Left lung (tissue), 14 donors: ENCODE measurements at regions of chr5 and their contacts with region 1.

Region 1: DNA sequence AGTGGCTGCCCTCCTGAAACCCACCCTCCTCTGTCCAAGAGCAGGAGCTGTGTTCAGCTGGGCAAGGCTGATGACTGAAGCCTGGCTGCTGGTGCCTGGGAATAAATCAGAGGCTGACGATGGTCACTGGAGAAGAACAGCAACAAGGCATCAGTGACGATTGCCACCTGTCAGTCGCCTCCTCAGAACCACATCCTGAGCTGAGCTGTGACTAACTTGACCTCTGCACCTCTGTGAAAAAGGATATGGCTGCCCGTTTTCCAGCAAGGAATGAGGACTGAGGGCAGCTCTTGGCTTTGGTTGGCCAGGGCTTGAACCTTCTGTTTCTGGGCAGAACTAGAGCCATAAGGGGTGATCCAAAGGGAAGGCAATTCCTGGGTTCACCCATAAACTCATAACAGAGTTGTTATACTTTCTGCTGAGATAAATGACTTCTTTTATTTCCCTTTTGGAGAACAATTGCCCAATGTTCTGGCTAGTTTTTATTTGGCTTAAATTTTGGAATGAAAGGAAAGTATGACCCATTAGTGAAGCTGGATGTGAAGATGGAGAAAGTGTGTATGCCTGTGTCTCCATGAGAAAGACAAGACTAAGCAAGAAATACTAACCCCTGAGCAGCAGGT is 40.1 kb downstream of the TRIP13 start:
- DNase-seq: no peak
- ATAC-seq: peak; percentile 47
- H3K4me3 ChIP-seq: no peak overlapping the region
- H3K27ac ChIP-seq: peak overlapping the region in 1 of 2 donors; percentile 44
- H3K4me1 ChIP-seq: no peaks in the 10 kb centered on the region
- H3K27me3 ChIP-seq: peaks cover 0 to 4% of the 10 kb centered on the region in 2 donors
- CTCF ChIP-seq: no peak

Region 2: DNA sequence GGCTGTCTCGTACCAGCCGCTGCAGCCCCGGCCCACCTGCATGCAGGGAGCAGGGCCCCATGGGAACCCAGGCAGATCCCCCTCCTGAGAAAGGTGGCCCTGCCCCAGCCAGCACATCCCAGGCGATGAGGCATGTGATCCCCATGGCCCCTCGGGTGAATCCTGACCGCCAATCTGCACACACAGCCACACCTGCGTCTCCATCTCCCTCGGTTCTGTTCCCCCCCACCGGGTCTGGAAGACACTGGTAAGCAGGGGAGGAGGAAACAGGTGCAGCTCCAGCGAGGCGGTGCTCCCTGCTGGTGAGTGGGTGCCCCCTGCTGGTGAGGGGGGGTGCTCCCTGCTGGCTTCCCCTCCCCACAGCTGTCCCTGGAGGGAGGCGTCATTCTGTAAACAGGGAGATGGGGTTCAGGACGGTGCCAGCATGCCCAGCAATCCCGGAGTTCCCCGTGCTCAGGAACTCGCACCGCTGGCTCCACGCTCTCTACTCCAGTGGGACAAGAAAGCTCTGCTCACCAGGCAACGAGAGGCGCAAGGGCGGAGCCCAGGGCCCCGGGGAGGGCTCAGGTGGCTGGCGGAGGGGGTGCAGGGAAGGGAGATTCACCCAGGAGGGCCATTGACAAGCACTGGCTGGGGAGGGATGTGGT is 207.6 kb after region 1 on chr5:
- intact Hi-C with region 1: loop called in 1 of 2 experiments (anchors 5 kb)
- DNase-seq: peak in 3 of 4 donors; percentile 70 to 88 (median 75)
- ATAC-seq: peak; percentile 93
- H3K4me3 ChIP-seq: no peak overlapping the region
- H3K27ac ChIP-seq: no peak overlapping the region
- H3K4me1 ChIP-seq: peaks cover 0 to 9% of the 10 kb centered on the region in 2 donors
- H3K27me3 ChIP-seq: no peaks in the 10 kb centered on the region
- CTCF ChIP-seq: peak; percentile 69 to 86

Region 3: DNA sequence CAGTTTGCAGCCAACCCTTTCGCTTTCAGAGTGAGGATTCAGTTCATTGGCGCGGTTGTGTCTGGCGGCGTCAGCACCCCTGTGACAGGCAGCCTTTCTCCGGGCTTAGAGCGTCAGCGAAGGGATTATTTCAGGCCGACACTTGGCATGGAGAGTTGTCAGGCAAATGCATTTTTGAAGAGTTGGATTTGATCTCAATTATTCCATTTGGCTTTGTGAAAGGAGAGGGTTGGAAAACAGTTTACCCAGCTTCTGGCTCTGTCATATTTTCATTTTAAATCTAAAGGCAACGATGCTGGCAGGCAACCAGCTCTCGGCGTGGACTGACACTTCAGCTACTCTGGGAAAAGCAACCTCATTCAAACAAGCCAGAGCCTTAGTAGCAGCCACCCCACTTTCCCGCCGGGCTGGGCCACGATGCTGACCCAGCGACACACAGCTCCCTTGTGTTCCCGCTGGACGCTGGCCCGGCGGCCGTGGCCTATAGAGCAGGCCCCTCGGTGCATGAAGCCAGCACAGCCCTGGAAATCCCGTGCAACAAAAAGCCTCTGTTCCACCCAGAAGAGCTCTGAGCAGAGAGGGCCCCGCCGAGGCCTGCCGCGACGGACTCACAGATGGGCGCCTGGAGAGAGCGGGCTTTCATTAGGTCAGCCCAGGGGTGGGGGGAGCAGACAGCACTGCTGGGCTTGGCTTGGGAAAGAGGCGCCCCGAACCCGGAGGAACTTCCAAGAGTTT is 619.9 kb after region 1 on chr5:
- intact Hi-C with region 1: no loop called
- DNase-seq: peak in 2 of 4 donors; percentile 56 to 57
- ATAC-seq: peak; percentile 7
- H3K4me3 ChIP-seq: no peak overlapping the region
- H3K27ac ChIP-seq: peak overlapping the region; percentile 63 to 71
- H3K4me1 ChIP-seq: peaks cover 3 to 12% of the 10 kb centered on the region in 2 donors
- H3K27me3 ChIP-seq: peaks cover 0 to 21% of the 10 kb centered on the region in 2 donors
- CTCF ChIP-seq: no peak